PC-9 (cell line): ENCODE measurements at regions of chr9 and their contacts with region 1.

Region 1: GRCh38 chr9:114538241-114538640 is 33.0 kb upstream of the WHRN start:
- DNase-seq: peak in 1 of 2 experiments; percentile 54
- H3K4me3 ChIP-seq: no peak overlapping the region
- H3K27ac ChIP-seq: no peak overlapping the region
- H3K4me1 ChIP-seq: no peaks in the 10 kb centered on the region
- H3K27me3 ChIP-seq: no peaks in the 10 kb centered on the region
- CTCF ChIP-seq: peak; percentile 30; the same call in 1 of the 2 replicates

Region 2: GRCh38 chr9:114098936-114099802 is 439.1 kb before region 1 on chr9 and contains the start of gene KIF12:
- CTCF ChIA-PET with region 1: no interaction called
- POLR2A ChIA-PET with region 1: interaction called, 26 read pairs
- intact Hi-C with region 1: no loop called
- DNase-seq: no peak
- H3K4me3 ChIP-seq: no peak within 1 kb of the TSS
- H3K27ac ChIP-seq: no peak within 1 kb of the TSS
- H3K4me1 ChIP-seq: no peaks in the 10 kb centered on the region
- H3K27me3 ChIP-seq: 0 out of 2 replicates have a peak, but pooled peaks cover 1% of the 10 kb centered on the region
- CTCF ChIP-seq: no peak
- total RNA-seq, gene KIF12: not detected in 2 replicates

Region 3: GRCh38 chr9:114382699-114383520 is 155.3 kb before region 1 on chr9:
- CTCF ChIA-PET with region 1: no interaction called
- POLR2A ChIA-PET with region 1: no interaction called
- intact Hi-C with region 1: no loop called
- DNase-seq: no peak
- H3K4me3 ChIP-seq: no peak overlapping the region
- H3K27ac ChIP-seq: no peak overlapping the region
- H3K4me1 ChIP-seq: peaks cover 18% of the 10 kb centered on the region
- H3K27me3 ChIP-seq: no peaks in the 10 kb centered on the region
- CTCF ChIP-seq: no peak